ENCODE measurements at regions of chr17 and their contacts with region 1.

Region 1: GRCh38 chr17:50865984-50866774 is at the start of gene TOB1:
- DNase-seq: peak; percentile 98
- ATAC-seq: peak; percentile 76
- H3K4me3 ChIP-seq: peak within 1 kb of the TSS; percentile 82 to 98 (median 93)
- H3K4me3 Mint-ChIP-seq: peak within 1 kb of the TSS; percentile 97
- H3K27ac ChIP-seq: peak within 1 kb of the TSS; percentile 95 to 97
- H3K27ac Mint-ChIP-seq: peak within 1 kb of the TSS; percentile 99
- H3K4me1 ChIP-seq: peaks cover 18 to 20% of the 10 kb centered on the region in 2 donors
- H3K4me1 Mint-ChIP-seq: peaks cover 41% of the 10 kb centered on the region
- H3K27me3 ChIP-seq: no peaks in the 10 kb centered on the region
- H3K27me3 Mint-ChIP-seq: no peaks in the 10 kb centered on the region
- CTCF ChIP-seq: no peak
- total RNA-seq, gene TOB1: 28.9 and 36.5 TPM in 2 replicates

Region 2: GRCh38 chr17:50707289-50708049 is 158.7 kb before region 1 on chr17 and contains the start of gene ANKRD40:
- CTCF ChIA-PET with region 1: interaction called, 3 read pairs
- POLR2A ChIA-PET with region 1: interaction called, 4 read pairs
- intact Hi-C with region 1: loop called (anchors 5 kb)
- DNase-seq: peak; percentile 95
- ATAC-seq: peak; percentile 78
- H3K4me3 ChIP-seq: peak within 1 kb of the TSS; percentile 57 to 87 (median 80)
- H3K4me3 Mint-ChIP-seq: peak within 1 kb of the TSS; percentile 96
- H3K27ac ChIP-seq: peak within 1 kb of the TSS; percentile 92 to 99
- H3K27ac Mint-ChIP-seq: peak within 1 kb of the TSS; percentile 97
- H3K4me1 ChIP-seq: peaks cover 25 to 30% of the 10 kb centered on the region in 2 donors
- H3K4me1 Mint-ChIP-seq: peaks cover 43% of the 10 kb centered on the region
- H3K27me3 ChIP-seq: no peaks in the 10 kb centered on the region
- H3K27me3 Mint-ChIP-seq: no peaks in the 10 kb centered on the region
- CTCF ChIP-seq: no peak
- total RNA-seq, gene ANKRD40: 35.3 and 43.1 TPM in 2 replicates

Region 3: GRCh38 chr17:50883850-50884438 is 17.8 kb after region 1 on chr17:
- CTCF ChIA-PET with region 1: interaction called, 4 read pairs
- POLR2A ChIA-PET with region 1: interaction called, 20 read pairs
- intact Hi-C with region 1: no loop called
- DNase-seq: peak; percentile 58
- ATAC-seq: peak; percentile 85
- H3K4me3 ChIP-seq: no peak overlapping the region
- H3K4me3 Mint-ChIP-seq: no peak overlapping the region
- H3K27ac ChIP-seq: no peak overlapping the region
- H3K27ac Mint-ChIP-seq: peak overlapping the region; percentile 61
- H3K4me1 ChIP-seq: peaks cover 8 to 11% of the 10 kb centered on the region in 2 donors
- H3K4me1 Mint-ChIP-seq: peaks cover 13% of the 10 kb centered on the region
- H3K27me3 ChIP-seq: no peaks in the 10 kb centered on the region
- H3K27me3 Mint-ChIP-seq: no peaks in the 10 kb centered on the region
- CTCF ChIP-seq: no peak

Region 4: GRCh38 chr17:50949989-50950881 is 84.1 kb after region 1 on chr17:
- CTCF ChIA-PET with region 1: interaction called, 6 read pairs
- POLR2A ChIA-PET with region 1: interaction called, 18 read pairs
- intact Hi-C with region 1: loop called (anchors 2 kb)
- DNase-seq: peak; percentile 62
- ATAC-seq: peak; percentile 72
- H3K4me3 ChIP-seq: peak overlapping the region in 1 of 5 experiments; percentile 36
- H3K4me3 Mint-ChIP-seq: peak overlapping the region; percentile 70
- H3K27ac ChIP-seq: no peak overlapping the region
- H3K27ac Mint-ChIP-seq: peak overlapping the region; percentile 27
- H3K4me1 ChIP-seq: peaks cover 10 to 13% of the 10 kb centered on the region in 2 donors
- H3K4me1 Mint-ChIP-seq: peaks cover 10% of the 10 kb centered on the region
- H3K27me3 ChIP-seq: peaks cover 0 to 7% (median 0%) of the 10 kb centered on the region in 4 experiments
- H3K27me3 Mint-ChIP-seq: peaks cover 9% of the 10 kb centered on the region
- CTCF ChIP-seq: no peak

Region 5: DNA sequence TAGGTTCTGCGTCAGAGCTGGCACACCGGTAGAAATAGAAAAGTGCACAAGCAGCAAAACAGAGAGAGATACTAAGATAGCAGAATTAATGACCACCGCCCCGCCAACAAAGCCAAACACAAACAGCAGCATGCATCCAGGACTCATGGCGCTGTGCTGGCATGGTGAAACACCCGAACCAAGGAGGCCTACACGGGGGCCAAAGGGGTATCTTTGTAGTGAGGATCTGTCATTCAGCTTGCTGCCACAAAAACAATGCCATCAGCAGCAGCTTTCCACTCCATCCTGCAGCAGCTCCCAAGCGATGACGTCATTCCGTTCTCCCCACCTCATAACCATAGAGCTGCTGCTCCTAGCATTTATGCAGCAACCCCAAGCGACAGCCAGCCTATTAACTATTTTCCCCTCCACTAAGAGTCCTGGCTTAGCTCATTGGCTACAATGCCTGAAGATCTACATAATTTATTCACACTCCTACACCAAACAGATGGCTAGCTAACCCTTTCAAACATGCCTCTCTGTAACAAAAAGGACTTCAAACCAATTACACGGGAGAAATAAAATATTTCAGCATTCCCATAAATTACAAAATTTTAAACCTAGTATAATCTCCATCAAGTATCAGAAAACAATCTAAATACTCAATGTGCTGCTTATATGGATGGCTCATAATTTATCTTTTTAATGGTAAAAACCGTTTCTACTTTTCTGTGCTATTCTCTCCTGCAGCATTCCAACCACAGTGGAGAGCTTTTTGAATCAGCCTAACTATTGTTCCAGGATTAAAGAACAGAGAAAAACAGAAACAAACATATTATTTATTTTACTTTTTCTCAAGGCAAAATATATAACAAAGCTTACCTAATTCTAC is 180.6 kb after region 1 on chr17:
- CTCF ChIA-PET with region 1: no interaction called
- POLR2A ChIA-PET with region 1: no interaction called
- intact Hi-C with region 1: loop called (anchors 5 kb)
- DNase-seq: no peak
- ATAC-seq: no peak
- H3K4me3 ChIP-seq: no peak overlapping the region
- H3K4me3 Mint-ChIP-seq: no peak overlapping the region
- H3K27ac ChIP-seq: no peak overlapping the region
- H3K27ac Mint-ChIP-seq: no peak overlapping the region
- H3K4me1 ChIP-seq: peaks cover 15 to 26% of the 10 kb centered on the region in 2 donors
- H3K4me1 Mint-ChIP-seq: peaks cover 18% of the 10 kb centered on the region
- H3K27me3 ChIP-seq: no peaks in the 10 kb centered on the region
- H3K27me3 Mint-ChIP-seq: no peaks in the 10 kb centered on the region
- CTCF ChIP-seq: no peak

Region 6: DNA sequence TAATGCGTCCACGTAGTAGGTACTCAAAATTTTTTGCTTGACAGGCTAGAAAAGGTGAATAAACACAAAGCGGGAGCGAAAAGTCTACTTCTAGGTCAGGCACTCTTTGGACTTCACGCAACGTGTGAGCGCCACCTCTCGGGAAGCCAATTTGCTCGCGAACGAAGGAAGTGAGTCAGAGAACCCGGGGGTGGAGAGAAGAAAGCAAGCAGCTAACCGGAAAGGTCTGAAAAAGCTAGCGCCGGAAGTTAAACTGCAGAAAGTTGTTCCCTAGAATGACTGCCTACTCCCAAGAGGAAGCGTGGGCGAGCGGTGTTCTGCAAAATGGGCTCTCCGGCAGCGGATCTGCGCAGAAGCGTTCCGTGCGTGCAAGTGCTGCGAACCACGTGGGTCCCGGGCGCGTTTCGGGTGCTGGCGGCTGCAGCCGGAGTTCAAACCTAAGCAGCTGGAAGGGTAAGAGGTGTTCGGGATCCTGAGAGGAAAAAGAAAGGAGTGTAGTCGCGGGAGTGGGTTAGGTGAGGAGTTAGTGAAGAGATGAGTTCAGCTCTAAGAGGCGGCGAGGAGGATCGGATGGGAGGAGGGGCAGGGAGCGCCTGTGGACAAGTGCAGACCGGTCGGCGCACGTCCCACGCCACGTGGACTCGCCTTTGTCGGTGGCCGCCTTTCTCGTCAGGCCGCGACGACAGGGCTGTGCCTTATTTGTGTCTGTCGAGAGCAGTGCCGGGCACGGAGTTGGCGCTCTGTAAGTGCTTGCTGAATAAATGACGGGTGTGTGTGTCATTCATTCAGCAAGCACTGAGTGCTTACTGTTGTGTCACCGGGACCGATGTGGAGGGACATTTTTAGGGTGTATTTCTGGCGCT is 287.3 kb after region 1 on chr17 and contains the start of gene NME1:
- CTCF ChIA-PET with region 1: interaction called, 16 read pairs
- POLR2A ChIA-PET with region 1: interaction called, 15 read pairs
- intact Hi-C with region 1: loop called (anchors 1 kb)
- DNase-seq: peak; percentile 98
- ATAC-seq: peak; percentile 88
- H3K4me3 ChIP-seq: peak within 1 kb of the TSS; percentile 55 to 86 (median 81)
- H3K4me3 Mint-ChIP-seq: no peak within 1 kb of the TSS
- H3K27ac ChIP-seq: peak within 1 kb of the TSS; percentile 68 to 83
- H3K27ac Mint-ChIP-seq: no peak within 1 kb of the TSS
- H3K4me1 ChIP-seq: peaks cover 16 to 23% of the 10 kb centered on the region in 2 donors
- H3K4me1 Mint-ChIP-seq: peaks cover 7% of the 10 kb centered on the region
- H3K27me3 ChIP-seq: no peaks in the 10 kb centered on the region
- H3K27me3 Mint-ChIP-seq: no peaks in the 10 kb centered on the region
- CTCF ChIP-seq: peak; percentile 86
- total RNA-seq, gene NME1: 19.0 and 20.5 TPM in 2 replicates

Region 7: DNA sequence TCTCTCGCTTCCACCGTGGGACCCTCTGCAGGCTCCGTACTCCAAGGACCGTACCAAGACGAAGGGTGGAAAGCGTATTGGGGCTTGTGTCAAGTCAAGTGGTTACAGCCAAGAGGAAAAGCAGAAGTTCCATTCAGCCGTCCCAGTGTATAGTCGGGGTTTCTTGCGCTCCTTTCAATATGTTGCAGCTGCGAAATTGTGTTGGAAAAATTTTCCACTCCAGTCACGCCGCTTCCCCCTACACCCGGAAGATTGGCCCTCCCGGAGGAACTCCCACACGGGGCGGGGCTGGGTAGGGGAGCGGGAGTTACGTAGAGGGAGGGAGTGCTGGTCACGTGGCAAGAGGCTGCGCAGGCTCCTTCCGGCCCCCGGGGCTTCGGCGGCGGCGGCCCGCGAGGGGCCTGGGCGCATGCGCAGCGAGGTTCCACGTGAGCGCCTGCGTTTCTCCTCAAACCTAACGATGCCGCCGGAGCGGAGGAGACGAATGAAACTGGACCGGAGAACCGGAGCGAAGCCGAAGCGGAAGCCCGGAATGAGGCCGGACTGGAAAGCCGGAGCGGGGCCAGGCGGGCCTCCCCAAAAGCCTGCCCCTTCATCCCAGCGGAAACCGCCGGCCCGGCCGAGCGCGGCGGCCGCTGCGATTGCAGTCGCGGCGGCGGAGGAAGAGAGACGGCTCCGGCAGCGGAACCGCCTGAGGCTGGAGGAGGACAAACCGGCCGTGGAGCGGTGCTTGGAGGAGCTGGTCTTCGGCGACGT is 394.1 kb after region 1 on chr17 and contains the start of gene UTP18:
- CTCF ChIA-PET with region 1: no interaction called
- POLR2A ChIA-PET with region 1: interaction called, 10 read pairs
- intact Hi-C with region 1: loop called (anchors 2 kb)
- DNase-seq: peak; percentile 99
- ATAC-seq: peak; percentile 85
- H3K4me3 ChIP-seq: peak within 1 kb of the TSS; percentile 86 to 97 (median 92)
- H3K4me3 Mint-ChIP-seq: peak within 1 kb of the TSS; percentile 98
- H3K27ac ChIP-seq: peak within 1 kb of the TSS; percentile 96 to 98
- H3K27ac Mint-ChIP-seq: peak within 1 kb of the TSS; percentile 99
- H3K4me1 ChIP-seq: peaks cover 26 to 36% of the 10 kb centered on the region in 2 donors
- H3K4me1 Mint-ChIP-seq: peaks cover 54% of the 10 kb centered on the region
- H3K27me3 ChIP-seq: no peaks in the 10 kb centered on the region
- H3K27me3 Mint-ChIP-seq: no peaks in the 10 kb centered on the region
- CTCF ChIP-seq: no peak
- total RNA-seq, gene UTP18: 34.2 and 37.7 TPM in 2 replicates